Activated B cell treated with CpG ODN at 0.5 μM for 24 hours (primary cell): ENCODE measurements at regions of chr7 and their contacts with region 1.

Region 1: DNA sequence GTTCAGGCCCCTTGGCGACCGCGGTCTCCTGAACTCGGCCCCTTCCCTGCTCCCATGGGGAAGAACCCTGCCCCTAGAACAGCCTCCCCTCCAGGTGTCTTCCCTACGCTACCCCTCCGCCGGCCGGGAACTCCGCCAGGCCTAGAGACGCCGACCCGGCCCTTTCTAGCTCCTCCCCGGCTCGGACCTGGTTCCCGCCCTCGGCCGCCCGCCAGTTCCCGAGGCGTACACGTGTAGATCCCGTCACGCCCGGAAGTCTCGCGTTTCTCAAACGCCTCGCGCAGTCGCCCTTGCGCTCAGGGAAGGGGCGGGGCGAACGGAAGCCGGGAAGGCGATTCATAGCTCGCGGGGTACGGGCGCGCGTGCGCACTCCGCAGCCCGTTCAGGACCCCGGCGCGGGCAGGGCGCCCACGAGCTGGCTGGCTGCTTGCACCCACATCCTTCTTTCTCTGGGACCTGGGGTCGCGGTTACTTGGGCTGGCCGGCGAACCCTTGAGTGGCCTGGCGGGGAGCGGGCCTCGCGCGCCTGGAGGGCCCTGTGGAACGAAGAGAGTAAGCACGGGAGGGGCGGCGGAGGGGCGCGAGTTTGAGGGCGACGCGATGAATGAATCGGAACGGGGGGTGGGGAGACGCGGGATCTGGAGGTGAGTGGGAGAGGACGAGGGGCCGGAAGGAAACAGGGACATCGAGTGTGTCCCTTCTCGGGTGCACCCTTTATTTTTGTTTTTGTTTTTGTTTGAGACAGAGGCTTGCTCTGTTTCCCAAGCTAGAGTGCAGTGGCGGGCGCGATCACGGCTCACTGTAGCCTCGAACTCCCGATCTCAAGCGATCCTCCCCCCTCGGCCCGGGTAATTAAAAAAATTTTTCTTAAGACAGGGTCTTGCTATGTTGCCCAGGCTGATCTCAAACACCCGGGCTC is at the start of gene POP7:
- DNase-seq: peak; percentile 98
- ATAC-seq: peak; percentile 94
- H3K4me3 Mint-ChIP-seq: peak within 1 kb of the TSS; percentile 93
- H3K27ac Mint-ChIP-seq: peak within 1 kb of the TSS; percentile 88
- H3K4me1 Mint-ChIP-seq: peaks cover 16% of the 10 kb centered on the region
- H3K27me3 Mint-ChIP-seq: no peaks in the 10 kb centered on the region
- CTCF ChIP-seq: no peak
- total RNA-seq, gene POP7: 21.5 and 21.7 TPM in 2 replicates

Region 2: DNA sequence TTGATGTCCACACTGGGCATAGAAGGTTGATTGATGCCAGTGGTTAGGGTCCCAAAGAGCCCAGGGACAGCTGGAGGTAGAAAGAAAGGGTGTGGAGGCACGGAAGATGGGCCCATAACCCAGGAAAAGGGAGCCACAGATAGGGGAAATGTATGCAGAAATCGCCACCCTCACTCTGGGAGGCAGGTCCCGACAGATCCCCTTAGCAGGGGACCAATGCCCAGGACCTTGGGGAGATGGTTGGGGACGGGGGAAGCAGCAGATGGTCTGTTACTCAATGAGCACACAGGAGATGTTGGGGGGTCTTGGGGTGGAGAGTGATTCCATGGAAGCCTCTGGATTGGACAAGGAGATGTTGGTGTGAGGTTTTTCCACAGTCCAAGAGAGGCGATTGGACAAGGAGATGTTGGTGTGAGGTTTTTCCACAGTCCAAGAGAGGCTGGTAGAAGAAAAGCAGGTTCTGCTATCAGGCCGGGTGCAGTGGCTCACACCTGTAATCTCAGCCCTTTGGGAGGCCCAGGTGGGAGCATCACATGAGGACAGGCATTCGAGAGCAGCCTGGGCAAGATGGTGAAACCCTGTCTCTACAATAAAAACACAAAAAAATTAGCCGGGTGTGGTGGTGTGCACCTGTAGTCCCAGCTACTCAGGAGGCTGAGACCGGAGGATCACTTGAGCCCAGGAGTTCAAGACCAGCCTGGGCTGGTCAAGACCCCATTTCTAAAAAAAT is 262.7 kb before region 1 on chr7:
- CTCF ChIA-PET with region 1: no interaction called
- POLR2A ChIA-PET with region 1: no interaction called
- intact Hi-C with region 1: no loop called
- DNase-seq: no peak
- ATAC-seq: no peak
- H3K4me3 Mint-ChIP-seq: no peak overlapping the region
- H3K27ac Mint-ChIP-seq: peak overlapping the region; percentile 19
- H3K4me1 Mint-ChIP-seq: peaks cover 18% of the 10 kb centered on the region
- H3K27me3 Mint-ChIP-seq: no peaks in the 10 kb centered on the region
- CTCF ChIP-seq: no peak

Region 3: DNA sequence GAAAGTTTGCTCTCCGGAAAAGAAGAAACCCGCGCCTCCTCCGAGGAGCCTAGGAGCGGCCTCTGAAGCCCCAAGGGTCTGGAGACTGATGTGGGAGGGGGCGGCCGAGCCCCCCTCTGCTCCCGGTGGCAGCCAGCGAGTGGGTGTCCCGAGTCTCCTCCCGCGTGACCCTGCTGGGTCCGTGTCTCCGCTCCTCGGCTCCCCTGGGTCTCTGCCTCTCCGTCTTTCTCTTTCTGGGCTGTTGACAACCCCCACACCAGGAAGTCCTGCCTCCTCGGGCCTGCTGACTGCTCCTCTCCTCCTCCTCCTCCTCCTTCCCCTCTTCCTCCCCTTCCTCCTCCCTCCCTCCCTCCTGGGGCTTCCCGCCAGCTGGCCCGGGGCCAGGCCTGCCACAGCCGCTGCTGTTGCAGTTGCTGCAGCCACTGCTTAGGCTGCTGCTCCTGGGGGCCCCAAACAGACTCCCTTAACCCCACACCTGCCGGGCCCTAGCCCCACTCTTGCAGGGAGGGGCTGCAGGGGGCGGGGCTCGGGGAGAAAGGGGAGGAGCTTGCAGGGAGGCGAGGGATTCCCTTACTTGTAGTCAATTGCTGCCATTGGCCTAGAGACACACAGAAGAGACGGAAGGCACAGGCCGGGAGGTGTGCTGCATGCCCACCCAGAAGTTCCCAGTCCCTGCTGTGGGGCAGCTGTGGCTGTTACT is 226.9 kb before region 1 on chr7 and contains the start of gene TSC22D4:
- CTCF ChIA-PET with region 1: no interaction called
- POLR2A ChIA-PET with region 1: no interaction called
- intact Hi-C with region 1: loop called (anchors 5 kb)
- DNase-seq: peak; percentile 81
- ATAC-seq: peak; percentile 73
- H3K4me3 Mint-ChIP-seq: peak within 1 kb of the TSS; percentile 93
- H3K27ac Mint-ChIP-seq: peak within 1 kb of the TSS; percentile 86
- H3K4me1 Mint-ChIP-seq: peaks cover 41% of the 10 kb centered on the region
- H3K27me3 Mint-ChIP-seq: no peaks in the 10 kb centered on the region
- CTCF ChIP-seq: no peak
- total RNA-seq, gene TSC22D4: 60.2 and 68.7 TPM in 2 replicates

Region 4: DNA sequence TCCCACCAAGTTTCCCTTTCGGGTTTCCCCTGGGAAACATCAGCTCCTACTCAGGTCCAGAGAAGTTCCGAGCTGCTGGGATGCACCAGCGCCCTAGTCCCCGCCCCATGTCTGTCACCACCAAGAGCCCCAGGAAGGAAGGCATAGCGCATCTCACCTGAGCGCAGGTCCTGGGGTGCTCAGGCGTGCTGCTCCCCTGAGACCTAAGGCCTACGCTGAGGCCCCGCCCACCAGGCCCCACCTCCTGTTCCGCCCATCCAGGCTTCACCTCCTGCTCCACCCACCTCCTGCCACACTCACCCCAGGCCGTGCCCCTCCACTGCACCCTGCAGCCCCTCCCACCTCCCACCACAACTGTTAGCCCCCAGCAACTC is 63.5 kb before region 1 on chr7:
- CTCF ChIA-PET with region 1: no interaction called
- POLR2A ChIA-PET with region 1: interaction called, 10 read pairs
- intact Hi-C with region 1: no loop called
- DNase-seq: peak; percentile 34
- ATAC-seq: peak; percentile 93
- H3K4me3 Mint-ChIP-seq: no peak overlapping the region
- H3K27ac Mint-ChIP-seq: no peak overlapping the region
- H3K4me1 Mint-ChIP-seq: peaks cover 9% of the 10 kb centered on the region
- H3K27me3 Mint-ChIP-seq: peaks cover 19% of the 10 kb centered on the region
- CTCF ChIP-seq: no peak

Region 5: GRCh38 chr7:100691676-100692577 is 14.1 kb before region 1 on chr7:
- CTCF ChIA-PET with region 1: interaction called, 79 read pairs
- POLR2A ChIA-PET with region 1: interaction called, 61 read pairs
- intact Hi-C with region 1: loop called (anchors 1 kb)
- DNase-seq: peak; percentile 67
- ATAC-seq: peak; percentile 63
- H3K4me3 Mint-ChIP-seq: peak overlapping the region; percentile 90
- H3K27ac Mint-ChIP-seq: peak overlapping the region; percentile 80
- H3K4me1 Mint-ChIP-seq: peaks cover 49% of the 10 kb centered on the region
- H3K27me3 Mint-ChIP-seq: no peaks in the 10 kb centered on the region
- CTCF ChIP-seq: peak; percentile 21

Region 6: DNA sequence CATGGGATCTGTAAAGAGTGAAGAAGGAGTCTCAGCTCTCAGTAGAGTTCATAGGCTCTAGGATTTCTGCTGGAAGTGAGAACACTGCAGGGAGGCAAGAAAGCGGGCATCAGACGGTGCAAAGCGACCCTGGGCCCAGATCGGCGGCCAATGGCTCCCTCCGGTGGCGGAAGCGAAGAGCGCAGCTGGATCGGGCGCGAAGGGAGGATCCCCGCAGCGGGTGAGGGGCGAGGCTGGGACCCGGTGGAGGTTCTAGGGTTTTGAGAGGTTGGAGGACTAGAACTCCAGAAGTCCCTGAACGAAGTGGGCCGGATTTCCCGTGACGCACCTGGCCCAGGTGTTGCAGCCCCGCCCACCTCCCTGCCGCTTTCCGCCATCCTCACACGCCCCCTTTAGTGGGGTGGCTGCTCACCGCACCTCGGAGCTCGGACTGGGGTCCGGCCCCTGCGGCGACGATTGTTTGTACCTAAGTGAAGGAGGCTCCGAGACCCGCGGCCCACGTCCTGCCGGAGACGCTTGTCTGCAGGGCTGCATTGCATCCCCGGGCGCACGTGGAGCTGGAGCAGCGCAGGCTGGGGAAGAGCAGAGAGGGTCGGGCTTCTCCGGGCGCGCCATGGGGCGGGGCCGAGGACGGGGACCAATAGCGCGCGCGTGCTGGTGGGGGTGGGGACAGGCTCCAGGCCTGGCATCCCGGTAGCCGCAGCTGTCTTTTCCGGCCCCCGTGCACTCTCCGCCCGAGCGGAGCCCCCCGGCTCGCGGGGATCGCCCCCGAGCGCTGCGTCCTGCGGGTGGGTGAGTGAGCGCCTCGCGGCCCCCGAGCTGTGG is 146.2 kb after region 1 on chr7 and contains the start of gene SLC12A9:
- CTCF ChIA-PET with region 1: interaction called, 64 read pairs
- POLR2A ChIA-PET with region 1: interaction called, 25 read pairs
- intact Hi-C with region 1: loop called (anchors 1 kb)
- DNase-seq: peak; percentile 83
- ATAC-seq: peak; percentile 93
- H3K4me3 Mint-ChIP-seq: peak within 1 kb of the TSS; percentile 89
- H3K27ac Mint-ChIP-seq: peak within 1 kb of the TSS; percentile 75
- H3K4me1 Mint-ChIP-seq: peaks cover 21% of the 10 kb centered on the region
- H3K27me3 Mint-ChIP-seq: no peaks in the 10 kb centered on the region
- CTCF ChIP-seq: peak; percentile 79
- total RNA-seq, gene SLC12A9: 48.0 and 48.9 TPM in 2 replicates

Region 7: DNA sequence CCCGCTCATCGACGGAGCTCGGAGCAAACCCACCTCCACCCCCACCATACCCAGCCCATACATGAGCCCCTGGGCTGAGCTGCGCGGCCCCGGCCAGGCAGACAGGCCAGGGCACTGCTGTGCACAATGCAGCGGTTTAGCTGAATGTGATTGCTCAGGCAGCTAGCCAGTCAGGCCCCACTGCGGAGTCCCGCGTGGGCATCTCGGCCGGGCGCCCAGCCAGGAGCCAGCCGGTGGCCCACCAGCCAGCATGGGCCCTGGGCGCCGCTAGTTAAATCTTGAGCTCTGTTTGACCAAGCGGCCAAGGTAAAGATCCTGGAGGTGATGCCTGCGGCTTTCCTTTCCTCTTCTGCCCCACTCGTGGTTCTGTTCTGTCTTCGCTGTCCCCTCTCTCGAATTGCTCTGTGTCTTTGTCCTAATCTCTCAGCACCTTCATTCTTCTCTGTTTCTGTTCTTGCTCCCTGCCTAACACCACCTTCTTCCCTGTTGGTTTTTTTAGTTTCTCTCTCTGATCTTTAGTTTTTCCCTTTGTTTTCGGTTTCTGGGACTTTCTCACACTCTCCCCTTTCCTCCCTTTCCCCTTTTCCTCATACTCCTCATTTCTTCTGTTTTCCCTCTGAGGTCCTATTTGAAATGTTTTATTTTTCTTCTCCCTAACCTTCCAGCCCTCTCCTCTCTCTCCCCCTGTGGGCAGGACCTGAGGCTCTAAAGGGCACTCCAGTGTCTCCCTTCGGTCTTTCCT is 176.9 kb after region 1 on chr7:
- CTCF ChIA-PET with region 1: no interaction called
- POLR2A ChIA-PET with region 1: no interaction called
- intact Hi-C with region 1: no loop called
- DNase-seq: no peak
- ATAC-seq: no peak
- H3K4me3 Mint-ChIP-seq: no peak overlapping the region
- H3K27ac Mint-ChIP-seq: no peak overlapping the region
- H3K4me1 Mint-ChIP-seq: peaks cover 53% of the 10 kb centered on the region
- H3K27me3 Mint-ChIP-seq: no peaks in the 10 kb centered on the region
- CTCF ChIP-seq: no peak

Region 8: DNA sequence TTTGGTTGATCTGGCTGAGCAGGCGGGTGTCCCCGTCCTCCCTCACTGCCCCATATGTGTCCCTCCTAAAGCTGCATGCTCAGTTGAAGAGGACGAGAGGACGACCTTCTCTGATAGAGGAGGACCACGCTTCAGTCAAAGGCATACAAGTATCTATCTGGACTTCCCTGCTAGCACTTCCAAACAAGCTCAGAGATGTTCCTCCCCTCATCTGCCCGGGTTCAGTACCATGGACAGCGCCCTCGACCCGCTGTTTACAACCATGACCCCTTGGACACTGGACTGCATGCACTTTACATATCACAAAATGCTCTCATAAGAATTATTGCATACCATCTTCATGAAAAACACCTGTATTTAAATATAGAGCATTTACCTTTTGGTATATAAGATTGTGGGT is 352.3 kb after region 1 on chr7:
- CTCF ChIA-PET with region 1: interaction called, 12 read pairs
- POLR2A ChIA-PET with region 1: no interaction called
- intact Hi-C with region 1: loop called (anchors 1 kb)
- DNase-seq: peak; percentile 43
- ATAC-seq: no peak
- H3K4me3 Mint-ChIP-seq: no peak overlapping the region
- H3K27ac Mint-ChIP-seq: no peak overlapping the region
- H3K4me1 Mint-ChIP-seq: no peaks in the 10 kb centered on the region
- H3K27me3 Mint-ChIP-seq: peaks cover 32% of the 10 kb centered on the region
- CTCF ChIP-seq: no peak